ENCODE measurements at regions of chr1 and their contacts with region 1.

Region 1: GRCh38 chr1:115665319-115666096 is 23.7 kb downstream of the VANGL1 start:
- DNase-seq: no peak
- H3K4me3 ChIP-seq: no peak overlapping the region
- H3K27ac ChIP-seq: no peak overlapping the region
- H3K4me1 ChIP-seq: no peaks in the 10 kb centered on the region
- H3K27me3 ChIP-seq: no peaks in the 10 kb centered on the region
- CTCF ChIP-seq: no peak

Region 2: DNA sequence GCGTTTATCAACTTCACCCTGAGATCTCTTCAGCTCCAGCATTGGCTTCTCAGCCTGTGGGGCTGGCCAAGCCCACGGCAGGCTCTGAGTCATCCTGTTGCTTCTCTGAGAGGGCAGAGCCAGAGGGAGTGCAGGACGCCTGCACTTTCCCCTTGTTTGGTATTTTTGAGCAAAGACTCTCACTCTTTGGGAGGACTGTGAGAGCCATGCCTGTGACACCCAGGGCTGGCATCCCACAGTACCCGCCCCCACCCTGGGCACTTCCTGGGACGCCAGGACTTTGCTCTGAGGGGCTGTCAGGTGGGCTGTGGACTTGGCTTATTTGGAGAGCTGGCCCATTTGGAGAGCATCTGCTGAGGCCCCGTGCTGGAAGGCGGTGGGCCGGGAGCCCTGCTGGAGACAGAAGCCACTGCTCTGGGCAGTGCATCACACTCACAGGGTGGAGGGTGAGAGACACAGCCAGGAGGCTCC is 13.7 kb after region 1 on chr1:
- CTCF ChIA-PET with region 1: no interaction called
- POLR2A ChIA-PET with region 1: interaction called, 11 read pairs
- intact Hi-C with region 1: no loop called
- DNase-seq: no peak
- H3K4me3 ChIP-seq: no peak overlapping the region
- H3K27ac ChIP-seq: no peak overlapping the region
- H3K4me1 ChIP-seq: peaks cover 10% of the 10 kb centered on the region
- H3K27me3 ChIP-seq: no peaks in the 10 kb centered on the region
- CTCF ChIP-seq: no peak

Region 3: DNA sequence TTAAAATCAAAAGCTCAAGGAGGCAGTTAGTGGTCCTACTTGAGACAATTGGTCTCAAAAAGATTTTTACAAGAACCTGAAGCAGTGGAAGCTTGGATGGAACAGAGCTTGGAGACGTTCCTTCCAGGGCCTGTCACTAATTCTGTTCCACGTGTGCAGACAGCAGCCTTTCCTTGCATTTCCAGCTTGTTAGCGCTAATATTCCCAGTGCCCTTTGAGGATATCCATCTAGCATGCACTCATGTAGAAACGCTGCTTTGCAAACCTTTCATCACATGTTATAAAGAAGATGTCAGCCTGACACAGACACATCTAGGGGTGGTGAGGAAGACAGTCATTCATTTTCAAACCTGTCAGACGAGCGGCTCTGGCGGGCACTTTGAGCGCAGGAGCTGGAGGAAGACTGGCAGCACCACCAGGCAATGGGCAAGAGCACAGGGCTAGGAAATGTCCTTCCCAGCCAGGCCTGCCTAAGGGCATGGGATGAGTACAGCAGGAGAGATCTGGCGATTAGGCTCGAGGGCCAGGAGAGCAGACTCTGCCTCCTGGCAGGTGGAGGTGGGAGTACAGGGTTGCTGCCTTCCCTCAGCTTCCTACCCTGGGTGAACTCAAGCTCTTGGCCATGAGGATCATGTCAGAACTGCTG is 47.5 kb after region 1 on chr1:
- CTCF ChIA-PET with region 1: no interaction called
- POLR2A ChIA-PET with region 1: no interaction called
- intact Hi-C with region 1: no loop called
- DNase-seq: no peak
- H3K4me3 ChIP-seq: no peak overlapping the region
- H3K27ac ChIP-seq: no peak overlapping the region
- H3K4me1 ChIP-seq: no peaks in the 10 kb centered on the region
- H3K27me3 ChIP-seq: no peaks in the 10 kb centered on the region
- CTCF ChIP-seq: no peak